ENCODE measurements at regions of chr17 and their contacts with region 1.

Region 1: GRCh38 chr17:30363715-30364202 is 15.0 kb upstream of the CPD start:
- DNase-seq: peak; percentile 56 to 91 (median 70)
- H3K4me3 ChIP-seq: peak overlapping the region; percentile 5
- H3K4me3 Mint-ChIP-seq: peak overlapping the region; percentile 49 to 72 (median 61)
- H3K27ac ChIP-seq: no peak overlapping the region
- H3K27ac Mint-ChIP-seq: peak overlapping the region; percentile 70 to 93 (median 82)
- H3K4me1 ChIP-seq: peaks cover 28% of the 10 kb centered on the region
- H3K4me1 Mint-ChIP-seq: peaks cover 28 to 41% (median 38%) of the 10 kb centered on the region in 3 donors
- H3K27me3 ChIP-seq: no peaks in the 10 kb centered on the region
- H3K27me3 Mint-ChIP-seq: peaks cover 0 to 2% of the 10 kb centered on the region in 2 donors

Region 2: GRCh38 chr17:30116661-30117551 is 246.9 kb before region 1 on chr17 and contains the start of gene NSRP1:
- CTCF ChIA-PET with region 1: no interaction called
- POLR2A ChIA-PET with region 1: no interaction called
- DNase-seq: peak; percentile 85 to 94 (median 87)
- H3K4me3 ChIP-seq: peak within 1 kb of the TSS; percentile 98
- H3K4me3 Mint-ChIP-seq: peak within 1 kb of the TSS; percentile 96 to 99 (median 98)
- H3K27ac ChIP-seq: peak within 1 kb of the TSS; percentile 99
- H3K27ac Mint-ChIP-seq: peak within 1 kb of the TSS; percentile 94 to 100 (median 98)
- H3K4me1 ChIP-seq: peaks cover 20% of the 10 kb centered on the region
- H3K4me1 Mint-ChIP-seq: peaks cover 41 to 53% (median 50%) of the 10 kb centered on the region in 3 donors
- H3K27me3 ChIP-seq: no peaks in the 10 kb centered on the region
- H3K27me3 Mint-ChIP-seq: peaks cover 0 to 1% of the 10 kb centered on the region in 2 donors
- total RNA-seq, gene NSRP1: 26.8 to 27.9 TPM

Region 3: GRCh38 chr17:30309591-30309990 is 54.2 kb before region 1 on chr17:
- CTCF ChIA-PET with region 1: no interaction called
- POLR2A ChIA-PET with region 1: no interaction called
- DNase-seq: no peak
- H3K4me3 ChIP-seq: no peak overlapping the region
- H3K4me3 Mint-ChIP-seq: no peak overlapping the region
- H3K27ac ChIP-seq: no peak overlapping the region
- H3K27ac Mint-ChIP-seq: peak overlapping the region in 1 of 8 donors; percentile 85
- H3K4me1 ChIP-seq: no peaks in the 10 kb centered on the region
- H3K4me1 Mint-ChIP-seq: no peaks in the 10 kb centered on the region
- H3K27me3 ChIP-seq: no peaks in the 10 kb centered on the region
- H3K27me3 Mint-ChIP-seq: peaks cover 0 to 3% of the 10 kb centered on the region in 2 donors

Region 4: GRCh38 chr17:30378824-30379302 is 15.1 kb after region 1 on chr17 and contains the start of gene CPD:
- CTCF ChIA-PET with region 1: interaction called, 9 read pairs
- POLR2A ChIA-PET with region 1: interaction called, 15 read pairs
- DNase-seq: peak; percentile 94 to 97 (median 96)
- H3K4me3 ChIP-seq: peak within 1 kb of the TSS; percentile 94
- H3K4me3 Mint-ChIP-seq: peak within 1 kb of the TSS; percentile 88 to 98 (median 94)
- H3K27ac ChIP-seq: peak within 1 kb of the TSS; percentile 90
- H3K27ac Mint-ChIP-seq: peak within 1 kb of the TSS; percentile 86 to 99 (median 96)
- H3K4me1 ChIP-seq: peaks cover 39% of the 10 kb centered on the region
- H3K4me1 Mint-ChIP-seq: peaks cover 54 to 67% (median 61%) of the 10 kb centered on the region in 3 donors
- H3K27me3 ChIP-seq: no peaks in the 10 kb centered on the region
- H3K27me3 Mint-ChIP-seq: peaks cover 4% of the 10 kb centered on the region in 2 donors
- total RNA-seq, gene CPD: 22.8 to 26.7 TPM

Region 5: GRCh38 chr17:30449480-30449879 is 85.7 kb after region 1 on chr17:
- CTCF ChIA-PET with region 1: no interaction called
- POLR2A ChIA-PET with region 1: no interaction called
- DNase-seq: no peak
- H3K4me3 ChIP-seq: no peak overlapping the region
- H3K4me3 Mint-ChIP-seq: no peak overlapping the region
- H3K27ac ChIP-seq: no peak overlapping the region
- H3K27ac Mint-ChIP-seq: no peak overlapping the region
- H3K4me1 ChIP-seq: no peaks in the 10 kb centered on the region
- H3K4me1 Mint-ChIP-seq: peaks cover 10 to 15% (median 11%) of the 10 kb centered on the region in 3 donors
- H3K27me3 ChIP-seq: no peaks in the 10 kb centered on the region
- H3K27me3 Mint-ChIP-seq: no peaks in the 10 kb centered on the region

Region 6: GRCh38 chr17:30520436-30520835 is 156.7 kb after region 1 on chr17:
- CTCF ChIA-PET with region 1: no interaction called
- POLR2A ChIA-PET with region 1: interaction called, 12 read pairs
- DNase-seq: no peak
- H3K4me3 ChIP-seq: no peak overlapping the region
- H3K4me3 Mint-ChIP-seq: no peak overlapping the region
- H3K27ac ChIP-seq: no peak overlapping the region
- H3K27ac Mint-ChIP-seq: peak overlapping the region in 1 of 8 donors; percentile 37
- H3K4me1 ChIP-seq: no peaks in the 10 kb centered on the region
- H3K4me1 Mint-ChIP-seq: peaks cover 4 to 12% (median 10%) of the 10 kb centered on the region in 3 donors
- H3K27me3 ChIP-seq: no peaks in the 10 kb centered on the region
- H3K27me3 Mint-ChIP-seq: no peaks in the 10 kb centered on the region